CD14-positive monocyte (primary cell): ENCODE measurements at regions of chr6 and their contacts with region 1.

Region 1: GRCh38 chr6:17706580-17707370 is at the start of gene NUP153:
- DNase-seq: peak; percentile 98 to 99 (median 98)
- H3K4me3 ChIP-seq: peak within 1 kb of the TSS; percentile 66 to 93 (median 87)
- H3K4me3 Mint-ChIP-seq: peak within 1 kb of the TSS; percentile 88 to 96
- H3K27ac ChIP-seq: peak within 1 kb of the TSS; percentile 96
- H3K27ac Mint-ChIP-seq: peak within 1 kb of the TSS; percentile 94 to 98 (median 97)
- H3K4me1 ChIP-seq: peaks cover 46 to 52% of the 10 kb centered on the region in 2 donors
- H3K4me1 Mint-ChIP-seq: peaks cover 38% of the 10 kb centered on the region
- H3K27me3 ChIP-seq: no peaks in the 10 kb centered on the region
- H3K27me3 Mint-ChIP-seq: peaks cover 0 to 2% (median 0%) of the 10 kb centered on the region in 3 donors
- CTCF ChIP-seq: no peak
- polyA plus RNA-seq, gene NUP153: 0.99 to 13.8 (median 2.3) TPM

Region 2: DNA sequence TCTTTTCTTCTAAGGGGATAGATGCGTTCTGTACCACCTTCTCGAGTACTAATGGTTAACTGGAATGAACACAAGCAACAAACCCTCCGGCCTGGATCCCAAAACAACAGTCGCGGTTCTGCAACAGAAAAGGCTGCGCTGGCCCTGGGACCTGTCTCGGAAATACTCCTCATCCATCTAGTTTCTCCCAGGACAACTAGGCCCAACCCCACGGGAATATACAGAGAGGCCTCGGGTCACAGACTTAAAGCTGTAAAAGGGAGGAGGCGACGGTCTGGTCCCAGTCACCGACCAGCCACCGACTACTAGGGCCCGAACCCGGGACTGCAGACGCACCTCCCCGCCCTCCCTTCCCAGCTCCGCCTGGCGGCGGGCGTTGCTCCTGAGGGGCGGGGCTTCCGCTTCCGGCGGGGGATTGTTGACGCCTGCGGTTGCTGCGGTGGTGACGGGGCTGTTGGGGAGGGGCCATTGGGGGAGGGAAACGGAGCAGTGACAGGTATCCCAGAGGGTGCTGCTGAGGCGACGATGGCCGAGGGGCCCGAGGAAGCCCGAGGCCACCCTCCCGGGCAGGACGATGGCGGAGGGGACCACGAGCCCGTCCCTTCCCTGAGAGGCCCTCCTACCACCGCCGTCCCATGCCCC is 106.8 kb before region 1 on chr6 and contains the start of gene FAM8A1:
- intact Hi-C with region 1: loop called (anchors 5 to 10 kb)
- DNase-seq: peak; percentile 86 to 92 (median 92)
- H3K4me3 ChIP-seq: peak within 1 kb of the TSS; percentile 49 to 86 (median 71)
- H3K4me3 Mint-ChIP-seq: peak within 1 kb of the TSS; percentile 84 to 90
- H3K27ac ChIP-seq: peak within 1 kb of the TSS; percentile 24 to 93
- H3K27ac Mint-ChIP-seq: peak within 1 kb of the TSS; percentile 85 to 94 (median 89)
- H3K4me1 ChIP-seq: peaks cover 20 to 25% of the 10 kb centered on the region in 2 donors
- H3K4me1 Mint-ChIP-seq: peaks cover 31% of the 10 kb centered on the region
- H3K27me3 ChIP-seq: no peaks in the 10 kb centered on the region
- H3K27me3 Mint-ChIP-seq: peaks cover 0 to 3% (median 0%) of the 10 kb centered on the region in 3 donors
- CTCF ChIP-seq: peak; percentile 64
- polyA plus RNA-seq, gene FAM8A1: 6.8 to 9.9 (median 9.3) TPM

Region 3: DNA sequence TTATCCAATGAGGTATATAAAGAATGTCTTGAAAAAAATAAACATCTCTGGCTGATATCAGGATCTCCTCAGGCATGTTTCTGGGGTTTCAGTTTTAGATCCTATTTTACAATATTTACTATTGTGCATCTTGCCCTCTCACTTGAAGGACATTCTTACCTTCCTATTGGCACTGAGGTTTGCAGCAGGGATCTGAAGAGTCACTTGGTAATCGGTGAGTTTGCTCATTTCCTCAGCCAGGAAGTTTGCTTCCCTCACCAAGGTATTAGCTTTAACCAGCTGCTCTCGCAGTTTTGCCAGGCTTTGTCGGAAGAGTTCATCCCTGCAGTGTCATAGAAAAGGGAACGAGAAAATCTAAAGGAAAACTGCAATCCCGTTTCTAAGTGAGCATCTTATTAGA is 101.8 kb after region 1 on chr6:
- intact Hi-C with region 1: loop called in 1 of 2 experiments (anchors 10 kb)
- DNase-seq: no peak
- H3K4me3 ChIP-seq: no peak overlapping the region
- H3K4me3 Mint-ChIP-seq: no peak overlapping the region
- H3K27ac ChIP-seq: no peak overlapping the region
- H3K27ac Mint-ChIP-seq: no peak overlapping the region
- H3K4me1 ChIP-seq: no peaks in the 10 kb centered on the region
- H3K4me1 Mint-ChIP-seq: peaks cover 17% of the 10 kb centered on the region
- H3K27me3 ChIP-seq: no peaks in the 10 kb centered on the region
- H3K27me3 Mint-ChIP-seq: peaks cover 0 to 3% (median 0%) of the 10 kb centered on the region in 3 donors
- CTCF ChIP-seq: no peak

Region 4: GRCh38 chr6:17907406-17908229 is 200.8 kb after region 1 on chr6:
- intact Hi-C with region 1: loop called in 1 of 2 experiments (anchors 10 kb)
- DNase-seq: peak; percentile 96 to 98 (median 98)
- H3K4me3 ChIP-seq: peak overlapping the region in 2 of 3 experiments; percentile 47 to 67
- H3K4me3 Mint-ChIP-seq: peak overlapping the region; percentile 61 to 92
- H3K27ac ChIP-seq: peak overlapping the region; percentile 88 to 93
- H3K27ac Mint-ChIP-seq: peak overlapping the region; percentile 92 to 99 (median 98)
- H3K4me1 ChIP-seq: peaks cover 49 to 64% of the 10 kb centered on the region in 2 donors
- H3K4me1 Mint-ChIP-seq: peaks cover 70% of the 10 kb centered on the region
- H3K27me3 ChIP-seq: no peaks in the 10 kb centered on the region
- H3K27me3 Mint-ChIP-seq: peaks cover 0 to 2% (median 0%) of the 10 kb centered on the region in 3 donors
- CTCF ChIP-seq: peak; percentile 39